ENCODE measurements at regions of chr7 and their contacts with region 1.

Region 1: GRCh38 chr7:46291064-46291463 is 370.0 kb upstream of the IGFBP3 start:
- DNase-seq: peak; percentile 96
- H3K4me3 ChIP-seq: no peak overlapping the region
- H3K27ac ChIP-seq: peak overlapping the region; percentile 98
- H3K4me1 ChIP-seq: peaks cover 27% of the 10 kb centered on the region
- H3K27me3 ChIP-seq: no peaks in the 10 kb centered on the region
- CTCF ChIP-seq: no peak

Region 2: GRCh38 chr7:46003896-46004875 is 286.9 kb before region 1 on chr7:
- CTCF ChIA-PET with region 1: no interaction called
- dilution Hi-C with region 1: no loop called
- in situ Hi-C with region 1: no loop called
- intact Hi-C with region 1: loop called (anchors 5 kb)
- DNase-seq: peak; percentile 98
- H3K4me3 ChIP-seq: no peak overlapping the region
- H3K27ac ChIP-seq: peak overlapping the region; percentile 56
- H3K4me1 ChIP-seq: peaks cover 43% of the 10 kb centered on the region
- H3K27me3 ChIP-seq: no peaks in the 10 kb centered on the region
- CTCF ChIP-seq: no peak

Region 3: DNA sequence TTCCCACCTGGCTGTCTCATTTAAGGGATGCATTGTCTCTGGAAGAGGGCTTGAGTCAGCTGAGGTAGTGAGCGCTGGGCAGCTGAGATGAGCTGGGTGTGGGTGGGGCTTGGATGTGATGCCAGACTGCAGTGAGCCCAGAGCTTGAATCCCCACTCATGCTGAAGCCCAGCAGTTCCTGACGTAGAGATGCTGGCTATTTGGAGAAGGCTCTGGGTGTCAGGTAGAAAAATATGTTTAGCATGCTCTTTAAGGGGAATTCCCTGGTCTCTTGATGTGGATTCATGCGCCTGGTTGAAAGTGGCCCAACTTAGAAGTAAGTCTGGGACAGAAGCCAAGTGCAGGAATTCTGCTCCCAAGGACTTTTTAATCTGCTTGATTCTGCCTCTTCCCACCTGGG is 128.5 kb before region 1 on chr7:
- CTCF ChIA-PET with region 1: no interaction called
- dilution Hi-C with region 1: no loop called
- in situ Hi-C with region 1: no loop called
- intact Hi-C with region 1: loop called (anchors 2 kb)
- DNase-seq: peak; percentile 66
- H3K4me3 ChIP-seq: no peak overlapping the region
- H3K27ac ChIP-seq: peak overlapping the region; percentile 9
- H3K4me1 ChIP-seq: peaks cover 30% of the 10 kb centered on the region
- H3K27me3 ChIP-seq: no peaks in the 10 kb centered on the region
- CTCF ChIP-seq: no peak

Region 4: GRCh38 chr7:46215987-46216567 is 75.0 kb before region 1 on chr7:
- CTCF ChIA-PET with region 1: no interaction called
- dilution Hi-C with region 1: no loop called
- in situ Hi-C with region 1: loop called in 1 of 2 experiments (anchors 5 kb)
- intact Hi-C with region 1: loop called (anchors 1 kb)
- DNase-seq: peak; percentile 95
- H3K4me3 ChIP-seq: no peak overlapping the region
- H3K27ac ChIP-seq: peak overlapping the region; percentile 62
- H3K4me1 ChIP-seq: peaks cover 33% of the 10 kb centered on the region
- H3K27me3 ChIP-seq: no peaks in the 10 kb centered on the region
- CTCF ChIP-seq: no peak

Region 5: GRCh38 chr7:46229409-46229808 is 61.7 kb before region 1 on chr7:
- CTCF ChIA-PET with region 1: no interaction called
- dilution Hi-C with region 1: loop called (anchors 5 kb)
- in situ Hi-C with region 1: loop called in 1 of 2 experiments (anchors 5 kb)
- intact Hi-C with region 1: no loop called
- DNase-seq: peak; percentile 78
- H3K4me3 ChIP-seq: no peak overlapping the region
- H3K27ac ChIP-seq: no peak overlapping the region
- H3K4me1 ChIP-seq: no peaks in the 10 kb centered on the region
- H3K27me3 ChIP-seq: peaks cover 6% of the 10 kb centered on the region
- CTCF ChIP-seq: no peak